CD4-positive, alpha-beta memory T cell (primary cell): ENCODE measurements at regions of chr14 and their contacts with region 1.

Region 1: GRCh38 chr14:97978341-97978740 is 1181.2 kb downstream of the VRK1 start:
- DNase-seq: peak; percentile 64 to 85 (median 67)
- H3K4me3 ChIP-seq: peak overlapping the region in 1 of 2 donors; percentile 64
- H3K4me3 Mint-ChIP-seq: peak overlapping the region; percentile 86 to 95 (median 92)
- H3K27ac ChIP-seq: peak overlapping the region; percentile 73
- H3K27ac Mint-ChIP-seq: peak overlapping the region; percentile 95 to 97 (median 96)
- H3K4me1 ChIP-seq: peaks cover 47% of the 10 kb centered on the region
- H3K4me1 Mint-ChIP-seq: peaks cover 39 to 67% (median 50%) of the 10 kb centered on the region in 4 donors
- H3K27me3 ChIP-seq: no peaks in the 10 kb centered on the region
- H3K27me3 Mint-ChIP-seq: peaks cover 0 to 2% of the 10 kb centered on the region in 2 donors

Region 2: DNA sequence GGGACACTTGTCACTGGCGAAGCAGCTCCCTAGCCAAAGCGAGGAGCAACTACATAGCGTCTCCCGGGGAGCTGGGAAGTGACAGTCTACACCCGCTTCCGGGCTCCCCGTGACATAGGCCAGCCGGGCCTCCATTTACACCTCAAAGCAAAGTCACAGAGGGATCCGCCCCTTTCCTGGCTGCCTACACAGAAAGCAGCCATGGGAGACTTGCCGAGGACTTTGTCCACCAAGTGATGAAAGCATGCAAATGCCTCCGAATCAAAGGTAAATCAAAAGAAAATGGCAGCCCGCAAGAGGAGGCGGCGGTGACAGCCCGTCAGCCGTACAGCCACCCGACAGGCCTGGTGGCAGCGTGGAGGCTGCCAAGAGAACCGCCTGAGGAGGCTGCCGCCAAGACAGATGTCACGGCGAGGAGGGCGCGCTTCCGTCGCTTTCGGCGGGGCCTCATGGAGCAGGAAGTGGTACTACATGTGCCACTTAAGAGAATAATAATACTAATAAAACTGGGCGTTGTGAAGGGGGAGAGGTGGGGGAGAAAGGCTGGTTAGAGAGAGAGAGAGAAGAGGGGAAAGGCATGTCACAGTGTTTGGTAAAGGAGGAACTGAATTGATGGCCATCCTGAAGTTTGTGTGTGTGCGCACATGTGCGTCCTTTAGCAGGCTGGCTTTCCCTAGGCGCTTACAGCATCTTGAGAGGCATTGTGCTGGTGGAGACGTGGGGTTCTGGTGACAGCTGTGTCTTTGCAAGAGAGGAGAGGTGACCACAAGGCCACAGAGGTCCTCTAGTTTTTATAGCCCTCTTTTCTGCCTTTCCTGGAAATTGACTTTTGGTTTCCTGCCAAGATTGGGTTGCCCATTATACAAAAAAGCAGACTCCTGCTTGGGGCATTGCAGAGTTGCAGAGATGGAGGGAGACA is 519.4 kb before region 1 on chr14:
- CTCF ChIA-PET with region 1: interaction called, 5 read pairs
- POLR2A ChIA-PET with region 1: interaction called, 13 read pairs
- intact Hi-C with region 1: no loop called
- DNase-seq: peak; percentile 82 to 91 (median 85)
- H3K4me3 ChIP-seq: peak overlapping the region; percentile 50 to 69
- H3K4me3 Mint-ChIP-seq: peak overlapping the region; percentile 89 to 97 (median 94)
- H3K27ac ChIP-seq: peak overlapping the region; percentile 70
- H3K27ac Mint-ChIP-seq: peak overlapping the region; percentile 91 to 99 (median 97)
- H3K4me1 ChIP-seq: peaks cover 45% of the 10 kb centered on the region
- H3K4me1 Mint-ChIP-seq: peaks cover 28 to 69% (median 50%) of the 10 kb centered on the region in 4 donors
- H3K27me3 ChIP-seq: no peaks in the 10 kb centered on the region
- H3K27me3 Mint-ChIP-seq: no peaks in the 10 kb centered on the region

Region 3: GRCh38 chr14:97724265-97724731 is 254.0 kb before region 1 on chr14:
- CTCF ChIA-PET with region 1: interaction called, 3 read pairs
- POLR2A ChIA-PET with region 1: interaction called, 10 read pairs
- intact Hi-C with region 1: loop called (anchors 5 kb)
- DNase-seq: peak; percentile 49 to 56 (median 53)
- H3K4me3 ChIP-seq: peak overlapping the region; percentile 0 to 45
- H3K4me3 Mint-ChIP-seq: peak overlapping the region; percentile 78 to 92 (median 85)
- H3K27ac ChIP-seq: peak overlapping the region; percentile 55
- H3K27ac Mint-ChIP-seq: peak overlapping the region; percentile 89 to 98 (median 94)
- H3K4me1 ChIP-seq: peaks cover 57% of the 10 kb centered on the region
- H3K4me1 Mint-ChIP-seq: peaks cover 57 to 76% (median 66%) of the 10 kb centered on the region in 4 donors
- H3K27me3 ChIP-seq: no peaks in the 10 kb centered on the region
- H3K27me3 Mint-ChIP-seq: no peaks in the 10 kb centered on the region

Region 4: GRCh38 chr14:98167705-98168104 is 189.4 kb after region 1 on chr14:
- CTCF ChIA-PET with region 1: interaction called, 8 read pairs
- POLR2A ChIA-PET with region 1: interaction called, 23 read pairs
- intact Hi-C with region 1: no loop called
- DNase-seq: peak in 2 of 5 donors; percentile 22 to 54
- H3K4me3 ChIP-seq: peak overlapping the region in 1 of 2 donors; percentile 15
- H3K4me3 Mint-ChIP-seq: peak overlapping the region in 7 of 8 donors; percentile 60 to 90 (median 71)
- H3K27ac ChIP-seq: peak overlapping the region; percentile 45
- H3K27ac Mint-ChIP-seq: peak overlapping the region; percentile 79 to 99 (median 90)
- H3K4me1 ChIP-seq: peaks cover 63% of the 10 kb centered on the region
- H3K4me1 Mint-ChIP-seq: peaks cover 53 to 82% (median 68%) of the 10 kb centered on the region in 4 donors
- H3K27me3 ChIP-seq: no peaks in the 10 kb centered on the region
- H3K27me3 Mint-ChIP-seq: no peaks in the 10 kb centered on the region

Region 5: GRCh38 chr14:98931911-98932310 is 953.6 kb after region 1 on chr14:
- CTCF ChIA-PET with region 1: interaction called, 4 read pairs
- POLR2A ChIA-PET with region 1: interaction called, 3 read pairs
- intact Hi-C with region 1: loop called (anchors 10 kb)
- DNase-seq: peak; percentile 82 to 85 (median 84)
- H3K4me3 ChIP-seq: peak overlapping the region in 1 of 2 donors; percentile 41
- H3K4me3 Mint-ChIP-seq: peak overlapping the region; percentile 68 to 91 (median 83)
- H3K27ac ChIP-seq: peak overlapping the region; percentile 16
- H3K27ac Mint-ChIP-seq: peak overlapping the region; percentile 79 to 97 (median 91)
- H3K4me1 ChIP-seq: peaks cover 66% of the 10 kb centered on the region
- H3K4me1 Mint-ChIP-seq: peaks cover 62 to 91% (median 78%) of the 10 kb centered on the region in 4 donors
- H3K27me3 ChIP-seq: no peaks in the 10 kb centered on the region
- H3K27me3 Mint-ChIP-seq: no peaks in the 10 kb centered on the region

Region 6: GRCh38 chr14:99266181-99267178 is 1288.1 kb after region 1 on chr14:
- CTCF ChIA-PET with region 1: interaction called, 36 read pairs
- POLR2A ChIA-PET with region 1: interaction called, 197 read pairs
- intact Hi-C with region 1: no loop called
- DNase-seq: peak; percentile 87 to 90 (median 88)
- H3K4me3 ChIP-seq: peak overlapping the region; percentile 91 to 99
- H3K4me3 Mint-ChIP-seq: peak overlapping the region; percentile 94 to 100 (median 98)
- H3K27ac ChIP-seq: peak overlapping the region; percentile 98
- H3K27ac Mint-ChIP-seq: peak overlapping the region; percentile 99 to 100 (median 100)
- H3K4me1 ChIP-seq: peaks cover 54% of the 10 kb centered on the region
- H3K4me1 Mint-ChIP-seq: peaks cover 42 to 72% (median 55%) of the 10 kb centered on the region in 4 donors
- H3K27me3 ChIP-seq: no peaks in the 10 kb centered on the region
- H3K27me3 Mint-ChIP-seq: no peaks in the 10 kb centered on the region